Psoas muscle (tissue), 8 donors: ENCODE measurements at regions of chr3 and their contacts with region 1.

Region 1: GRCh38 chr3:116757315-116757714 is 47.7 kb downstream of the TUSC7 start:
- DNase-seq: no peak
- ATAC-seq: no peak
- H3K4me3 ChIP-seq: no peak overlapping the region
- H3K27ac ChIP-seq: no peak overlapping the region
- H3K4me1 ChIP-seq: no peaks in the 10 kb centered on the region
- H3K27me3 ChIP-seq: no peaks in the 10 kb centered on the region
- CTCF ChIP-seq: no peak

Region 2: GRCh38 chr3:116140100-116140689 is 617.1 kb before region 1 on chr3:
- intact Hi-C with region 1: loop called (anchors 5 kb)
- DNase-seq: no peak
- ATAC-seq: no peak
- H3K4me3 ChIP-seq: no peak overlapping the region
- H3K27ac ChIP-seq: no peak overlapping the region
- H3K4me1 ChIP-seq: peaks cover 3% of the 10 kb centered on the region
- H3K27me3 ChIP-seq: no peaks in the 10 kb centered on the region
- CTCF ChIP-seq: peak; percentile 56

Region 3: GRCh38 chr3:116614795-116615362 is 142.4 kb before region 1 on chr3:
- intact Hi-C with region 1: loop called in 1 of 2 experiments (anchors 10 kb)
- DNase-seq: no peak
- ATAC-seq: no peak
- H3K4me3 ChIP-seq: no peak overlapping the region
- H3K27ac ChIP-seq: no peak overlapping the region
- H3K4me1 ChIP-seq: no peaks in the 10 kb centered on the region
- H3K27me3 ChIP-seq: no peaks in the 10 kb centered on the region
- CTCF ChIP-seq: no peak

Region 4: GRCh38 chr3:116691041-116691440 is 66.3 kb before region 1 on chr3:
- intact Hi-C with region 1: no loop called
- DNase-seq: no peak
- ATAC-seq: no peak
- H3K4me3 ChIP-seq: no peak overlapping the region
- H3K27ac ChIP-seq: no peak overlapping the region
- H3K4me1 ChIP-seq: no peaks in the 10 kb centered on the region
- H3K27me3 ChIP-seq: no peaks in the 10 kb centered on the region
- CTCF ChIP-seq: no peak